CD14-positive monocyte (primary cell): ENCODE measurements at regions of chr9 and their contacts with region 1.

Region 1: GRCh38 chr9:21443849-21444625 is 3.8 kb downstream of the IFNA1 start:
- DNase-seq: peak; percentile 72 to 87 (median 84)
- H3K4me3 ChIP-seq: peak overlapping the region in 1 of 3 experiments; percentile 45
- H3K4me3 Mint-ChIP-seq: peak overlapping the region in 1 of 2 donors; percentile 64
- H3K27ac ChIP-seq: no peak overlapping the region
- H3K27ac Mint-ChIP-seq: peak overlapping the region in 3 of 7 donors; percentile 20 to 59 (median 52)
- H3K4me1 ChIP-seq: peaks cover 16 to 19% of the 10 kb centered on the region in 2 donors
- H3K4me1 Mint-ChIP-seq: peaks cover 16% of the 10 kb centered on the region
- H3K27me3 ChIP-seq: peaks cover 17 to 31% of the 10 kb centered on the region in 2 donors
- H3K27me3 Mint-ChIP-seq: peaks cover 15 to 31% (median 28%) of the 10 kb centered on the region in 3 donors
- CTCF ChIP-seq: no peak

Region 2: GRCh38 chr9:21334701-21335632 is 109.1 kb before region 1 on chr9 and contains the start of gene KLHL9:
- intact Hi-C with region 1: loop called in 1 of 2 experiments (anchors 10 kb)
- DNase-seq: peak; percentile 85 to 88 (median 86)
- H3K4me3 ChIP-seq: peak within 1 kb of the TSS; percentile 76 to 97 (median 94)
- H3K4me3 Mint-ChIP-seq: peak within 1 kb of the TSS; percentile 85 to 91
- H3K27ac ChIP-seq: peak within 1 kb of the TSS; percentile 91 to 98
- H3K27ac Mint-ChIP-seq: peak within 1 kb of the TSS; percentile 88 to 95 (median 93)
- H3K4me1 ChIP-seq: peaks cover 22 to 39% of the 10 kb centered on the region in 2 donors
- H3K4me1 Mint-ChIP-seq: peaks cover 47% of the 10 kb centered on the region
- H3K27me3 ChIP-seq: no peaks in the 10 kb centered on the region
- H3K27me3 Mint-ChIP-seq: peaks cover 0 to 8% (median 6%) of the 10 kb centered on the region in 3 donors
- CTCF ChIP-seq: no peak
- polyA plus RNA-seq, gene KLHL9: 2.8 to 9.0 (median 7.7) TPM

Region 3: GRCh38 chr9:21381448-21382339 is 62.3 kb before region 1 on chr9:
- intact Hi-C with region 1: loop called in 1 of 2 experiments (anchors 5 kb)
- DNase-seq: peak; percentile 60 to 81 (median 75)
- H3K4me3 ChIP-seq: peak overlapping the region; percentile 18 to 70 (median 57)
- H3K4me3 Mint-ChIP-seq: peak overlapping the region; percentile 69 to 78
- H3K27ac ChIP-seq: no peak overlapping the region
- H3K27ac Mint-ChIP-seq: peak overlapping the region in 5 of 7 donors; percentile 30 to 77 (median 50)
- H3K4me1 ChIP-seq: peaks cover 27 to 33% of the 10 kb centered on the region in 2 donors
- H3K4me1 Mint-ChIP-seq: peaks cover 36% of the 10 kb centered on the region
- H3K27me3 ChIP-seq: peaks cover 55 to 72% of the 10 kb centered on the region in 2 donors
- H3K27me3 Mint-ChIP-seq: peaks cover 40 to 61% (median 46%) of the 10 kb centered on the region in 3 donors
- CTCF ChIP-seq: no peak